ENCODE measurements at regions of chr4 and their contacts with region 1.

Region 1: GRCh38 chr4:107989537-107990386 is at the start of gene HADH:
- DNase-seq: peak; percentile 73 to 85
- H3K4me3 ChIP-seq: peak within 1 kb of the TSS; percentile 82
- H3K27ac ChIP-seq: peak within 1 kb of the TSS; percentile 35; the same call in 1 of the 2 replicates
- H3K4me1 ChIP-seq: peaks cover 15% of the 10 kb centered on the region; the same call in 1 of the 2 replicates
- H3K27me3 ChIP-seq: no peaks in the 10 kb centered on the region
- CTCF ChIP-seq: no peak
- total RNA-seq, gene HADH: 36.8 and 45.0 TPM in 2 replicates

Region 2: DNA sequence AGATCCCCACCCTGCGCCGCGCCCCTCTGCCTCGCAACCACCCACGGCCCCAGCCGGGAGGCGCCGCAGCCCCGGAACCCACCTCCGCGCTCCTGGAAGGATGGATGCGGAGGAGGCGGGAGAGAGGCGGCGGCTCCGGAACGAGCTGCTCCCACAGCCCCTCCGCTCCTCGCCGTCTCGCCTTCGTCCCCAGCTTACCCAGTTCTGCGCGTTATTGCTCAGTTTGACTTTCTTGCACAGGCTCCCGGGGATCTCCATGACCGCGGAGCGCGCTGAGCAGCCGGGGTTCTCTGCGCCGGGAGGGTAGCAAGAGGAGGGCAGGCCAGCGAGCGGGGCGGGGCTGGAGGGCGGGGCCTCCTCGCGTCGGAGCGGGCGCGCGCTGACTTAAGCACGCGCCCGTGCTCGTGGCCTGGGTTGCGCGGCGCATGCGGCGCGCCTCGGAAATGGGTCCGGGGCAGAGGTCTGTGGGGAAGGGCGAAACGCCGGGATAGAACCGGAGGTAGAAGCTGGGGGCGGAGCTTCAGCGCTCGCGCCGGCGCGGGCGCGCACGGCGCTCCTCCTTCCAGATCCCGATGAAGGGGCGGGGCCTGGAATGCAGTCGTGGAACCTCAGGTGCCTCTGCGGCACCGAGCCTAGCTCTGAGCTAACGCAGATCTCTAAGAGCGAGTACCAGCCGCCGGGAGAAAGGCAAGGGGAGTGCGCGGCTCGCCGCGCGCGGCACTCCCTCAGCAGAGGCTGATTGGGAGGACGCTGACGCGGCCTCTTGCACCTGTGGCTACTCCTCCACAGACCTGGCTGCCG is 269.6 kb before region 1 on chr4 and contains the start of gene PAPSS1:
- CTCF ChIA-PET with region 1: no interaction called
- POLR2A ChIA-PET with region 1: no interaction called
- intact Hi-C with region 1: loop called (anchors 2 kb)
- DNase-seq: peak; percentile 86 to 93
- H3K4me3 ChIP-seq: peak within 1 kb of the TSS; percentile 82
- H3K27ac ChIP-seq: peak within 1 kb of the TSS; percentile 74
- H3K4me1 ChIP-seq: peaks cover 10% of the 10 kb centered on the region
- H3K27me3 ChIP-seq: no peaks in the 10 kb centered on the region
- CTCF ChIP-seq: no peak
- total RNA-seq, gene PAPSS1: 18.8 and 26.8 TPM in 2 replicates